Calu3 (cell line): ENCODE measurements at regions of chr6 and their contacts with region 1.

Region 1: GRCh38 chr6:131867744-131868143 is 59.9 kb downstream of the ENPP1 start:
- DNase-seq: no peak
- H3K4me3 Mint-ChIP-seq: no peak overlapping the region
- H3K27ac Mint-ChIP-seq: no peak overlapping the region
- H3K4me1 Mint-ChIP-seq: peaks cover 15% of the 10 kb centered on the region
- H3K27me3 Mint-ChIP-seq: no peaks in the 10 kb centered on the region
- CTCF ChIP-seq: no peak

Region 2: DNA sequence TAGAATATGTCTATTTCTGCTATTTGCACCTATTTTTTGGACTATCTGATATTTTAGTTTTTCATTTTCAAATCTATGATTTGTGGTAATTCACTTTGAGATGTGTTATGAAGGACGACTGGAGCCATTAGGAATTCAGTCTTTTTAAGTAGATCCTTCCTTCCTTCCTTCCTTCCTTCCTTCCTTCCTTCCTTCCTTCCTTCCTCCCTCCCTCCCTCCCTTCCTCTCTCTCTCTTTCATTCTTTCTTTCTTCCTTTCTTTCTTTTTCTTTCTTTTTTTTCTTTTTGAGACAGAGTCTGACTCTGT is 106.0 kb before region 1 on chr6:
- CTCF ChIA-PET with region 1: interaction called, 18 read pairs
- intact Hi-C with region 1: no loop called
- DNase-seq: no peak
- H3K4me3 Mint-ChIP-seq: no peak overlapping the region
- H3K27ac Mint-ChIP-seq: no peak overlapping the region
- H3K4me1 Mint-ChIP-seq: no peaks in the 10 kb centered on the region
- H3K27me3 Mint-ChIP-seq: peaks cover 15% of the 10 kb centered on the region
- CTCF ChIP-seq: no peak

Region 3: DNA sequence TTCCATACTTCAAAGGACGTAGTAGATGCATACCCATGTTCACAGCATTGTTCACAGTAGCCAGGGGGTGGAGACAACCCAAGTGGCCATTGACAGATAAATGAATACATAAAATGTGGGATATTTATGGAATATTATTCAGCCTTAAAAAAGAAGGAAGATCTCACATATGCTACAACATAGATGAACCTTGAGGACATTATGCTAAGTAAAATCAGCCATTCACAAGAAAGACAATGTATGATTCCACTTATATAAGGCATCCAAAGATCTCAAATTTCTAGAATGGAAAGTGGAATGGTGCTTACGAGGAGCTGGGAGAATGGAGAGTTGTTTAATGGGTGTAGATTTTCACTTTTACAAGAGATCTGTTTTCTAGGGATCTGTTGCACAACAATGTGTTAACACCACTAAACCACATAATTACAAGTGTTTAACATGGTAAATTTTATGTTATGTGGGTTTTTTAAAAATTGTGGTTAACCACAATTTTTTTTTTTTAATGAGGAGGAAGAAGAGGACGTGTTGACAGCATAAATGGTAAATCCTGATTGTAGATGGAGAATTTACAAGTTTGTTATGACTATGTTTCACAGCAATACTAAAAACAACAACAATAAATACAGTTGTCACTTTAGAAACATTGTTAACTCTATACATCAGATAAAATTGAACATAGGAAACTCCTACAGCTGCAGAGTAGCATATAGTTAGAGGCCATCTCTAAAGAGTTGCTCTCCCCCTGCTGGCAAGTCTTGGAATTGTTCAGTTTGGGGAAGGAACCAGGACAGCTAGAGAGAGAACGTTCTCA is 41.9 kb after region 1 on chr6:
- CTCF ChIA-PET with region 1: no interaction called
- intact Hi-C with region 1: no loop called
- DNase-seq: peak; percentile 84
- H3K4me3 Mint-ChIP-seq: no peak overlapping the region
- H3K27ac Mint-ChIP-seq: no peak overlapping the region
- H3K4me1 Mint-ChIP-seq: no peaks in the 10 kb centered on the region
- H3K27me3 Mint-ChIP-seq: peaks cover 11% of the 10 kb centered on the region
- CTCF ChIP-seq: peak; percentile 80